Activated CD8-positive, alpha-beta T cell treated with anti-CD3 and anti-CD28 coated beads for 36 hours (primary cell): ENCODE measurements at regions of chr10 and their contacts with region 1.

Region 1: GRCh38 chr10:101467286-101467770 is 113.4 kb downstream of the BTRC start:
- DNase-seq: peak; percentile 29
- ATAC-seq: peak; percentile 88
- H3K4me3 Mint-ChIP-seq: no peak overlapping the region
- H3K27ac Mint-ChIP-seq: no peak overlapping the region
- H3K4me1 Mint-ChIP-seq: peaks cover 8% of the 10 kb centered on the region
- H3K27me3 Mint-ChIP-seq: no peaks in the 10 kb centered on the region
- CTCF ChIP-seq: peak; percentile 75

Region 2: GRCh38 chr10:101453791-101454718 is 13.3 kb before region 1 on chr10:
- CTCF ChIA-PET with region 1: interaction called, 52 read pairs
- POLR2A ChIA-PET with region 1: no interaction called
- intact Hi-C with region 1: no loop called
- DNase-seq: peak; percentile 4
- ATAC-seq: peak; percentile 42
- H3K4me3 Mint-ChIP-seq: no peak overlapping the region
- H3K27ac Mint-ChIP-seq: no peak overlapping the region
- H3K4me1 Mint-ChIP-seq: peaks cover 31% of the 10 kb centered on the region
- H3K27me3 Mint-ChIP-seq: no peaks in the 10 kb centered on the region
- CTCF ChIP-seq: no peak

Region 3: DNA sequence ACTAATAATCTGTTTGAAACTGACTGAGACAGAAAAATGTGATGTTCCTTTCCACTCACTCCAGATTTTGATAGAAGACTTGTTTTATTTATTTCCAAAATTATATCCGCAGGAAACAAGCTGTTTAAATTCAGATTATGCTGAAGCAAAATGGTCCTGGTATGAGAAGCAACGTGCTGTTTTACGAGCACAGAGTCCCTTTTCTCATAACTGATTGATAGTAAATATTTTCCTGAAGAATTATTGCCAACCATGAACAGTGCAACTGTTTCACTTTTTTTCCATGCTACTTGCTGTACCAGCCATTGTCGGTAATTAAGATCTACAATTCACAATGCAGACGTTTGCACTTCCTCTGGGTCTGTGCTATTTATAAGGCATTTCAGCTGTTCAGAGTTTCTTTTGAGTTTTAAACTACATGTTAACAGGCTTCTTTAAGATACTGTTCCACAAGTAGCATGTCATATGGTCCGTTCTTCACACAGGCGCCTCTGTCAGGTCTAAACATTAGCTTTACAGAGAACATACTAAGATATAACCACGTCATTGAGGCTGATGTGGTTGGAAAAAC is 16.9 kb after region 1 on chr10:
- CTCF ChIA-PET with region 1: interaction called, 13 read pairs
- POLR2A ChIA-PET with region 1: no interaction called
- intact Hi-C with region 1: no loop called
- DNase-seq: no peak
- ATAC-seq: no peak
- H3K4me3 Mint-ChIP-seq: no peak overlapping the region
- H3K27ac Mint-ChIP-seq: no peak overlapping the region
- H3K4me1 Mint-ChIP-seq: peaks cover 2% of the 10 kb centered on the region
- H3K27me3 Mint-ChIP-seq: no peaks in the 10 kb centered on the region
- CTCF ChIP-seq: no peak